ENCODE measurements at regions of chr11 and their contacts with region 1.

Region 1: DNA sequence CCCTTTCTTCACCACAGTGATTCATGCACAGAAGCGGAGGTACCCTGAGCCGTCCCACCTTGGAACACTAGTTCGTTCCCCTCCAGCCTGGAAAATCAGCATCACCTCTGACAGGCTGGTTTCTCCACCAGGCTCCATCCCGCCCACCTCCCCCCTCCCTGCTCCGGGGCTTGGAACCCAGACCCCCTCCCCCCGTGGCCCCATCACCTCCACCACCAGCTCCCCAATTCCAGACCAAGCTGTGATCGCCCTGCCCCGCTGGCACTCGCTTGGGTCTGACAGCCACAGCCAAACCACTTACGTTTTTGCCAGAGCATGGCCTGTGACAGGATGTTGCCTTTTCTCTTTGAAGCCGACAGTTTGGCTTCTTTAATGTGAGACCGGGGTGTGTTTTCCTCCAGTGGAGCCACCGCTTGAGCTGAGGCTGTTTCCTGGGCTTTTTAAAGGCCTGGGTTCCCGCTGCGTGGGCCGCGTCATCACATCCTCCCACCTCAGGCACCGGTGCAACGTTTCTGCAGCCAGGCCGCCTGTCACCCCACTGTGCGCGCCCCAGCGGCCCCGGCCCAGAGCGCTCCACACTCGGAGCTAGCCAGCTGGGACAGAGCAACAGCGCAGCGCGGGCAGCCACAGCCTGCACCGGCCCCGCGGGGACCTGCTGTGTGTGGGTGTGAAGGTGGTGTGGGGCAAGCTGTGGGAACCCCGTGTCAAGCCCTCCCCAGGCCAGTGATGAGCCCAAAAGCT is at the start of gene POU2AF1:
- DNase-seq: peak; percentile 81
- H3K4me3 Mint-ChIP-seq: peak within 1 kb of the TSS; percentile 71
- H3K27ac Mint-ChIP-seq: peak within 1 kb of the TSS; percentile 86
- H3K4me1 Mint-ChIP-seq: peaks cover 58% of the 10 kb centered on the region
- H3K27me3 Mint-ChIP-seq: no peaks in the 10 kb centered on the region
- total RNA-seq, gene POU2AF1: 0.48 to 0.62 TPM

Region 2: GRCh38 chr11:111349191-111349695 is 29.8 kb before region 1 on chr11:
- CTCF ChIA-PET with region 1: no interaction called
- intact Hi-C with region 1: no loop called
- DNase-seq: no peak
- H3K4me3 Mint-ChIP-seq: no peak overlapping the region
- H3K27ac Mint-ChIP-seq: no peak overlapping the region
- H3K4me1 Mint-ChIP-seq: no peaks in the 10 kb centered on the region
- H3K27me3 Mint-ChIP-seq: no peaks in the 10 kb centered on the region

Region 3: DNA sequence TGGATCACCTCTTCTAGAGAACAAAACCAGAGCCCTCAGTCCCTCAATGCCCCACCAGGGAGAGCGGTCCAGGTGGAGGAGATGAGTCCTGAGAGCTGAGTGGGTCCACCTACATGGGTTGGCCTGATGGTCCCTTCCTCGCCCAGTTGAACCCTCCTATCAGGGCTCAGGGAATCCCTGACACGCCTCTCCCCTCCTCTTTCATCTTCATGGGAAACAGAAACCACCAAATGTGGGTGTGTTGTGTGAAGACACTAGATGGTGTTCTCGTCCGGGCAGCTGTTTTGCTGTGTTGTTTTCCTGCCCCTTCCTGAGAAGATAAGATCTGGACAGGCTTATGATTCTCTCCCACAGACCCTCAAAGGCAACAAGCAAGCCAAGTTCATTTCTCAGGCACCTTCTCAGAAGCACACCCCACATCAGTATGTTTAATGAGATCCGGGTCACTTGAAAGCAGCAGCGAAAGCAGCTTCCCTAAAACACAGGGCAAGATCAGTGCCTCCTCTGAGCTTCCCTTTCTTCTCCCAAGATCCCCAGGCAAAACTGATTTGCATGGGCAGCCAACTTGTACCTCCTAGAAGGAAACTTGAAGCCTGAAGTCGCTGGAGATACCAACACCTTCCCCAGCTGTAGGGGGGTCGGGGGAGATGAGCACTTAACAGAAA is 35.4 kb after region 1 on chr11:
- CTCF ChIA-PET with region 1: interaction called, 3 read pairs
- intact Hi-C with region 1: loop called (anchors 1 kb)
- DNase-seq: peak; percentile 16
- H3K4me3 Mint-ChIP-seq: peak overlapping the region; percentile 10
- H3K27ac Mint-ChIP-seq: peak overlapping the region; percentile 3
- H3K4me1 Mint-ChIP-seq: peaks cover 49% of the 10 kb centered on the region
- H3K27me3 Mint-ChIP-seq: no peaks in the 10 kb centered on the region

Region 4: DNA sequence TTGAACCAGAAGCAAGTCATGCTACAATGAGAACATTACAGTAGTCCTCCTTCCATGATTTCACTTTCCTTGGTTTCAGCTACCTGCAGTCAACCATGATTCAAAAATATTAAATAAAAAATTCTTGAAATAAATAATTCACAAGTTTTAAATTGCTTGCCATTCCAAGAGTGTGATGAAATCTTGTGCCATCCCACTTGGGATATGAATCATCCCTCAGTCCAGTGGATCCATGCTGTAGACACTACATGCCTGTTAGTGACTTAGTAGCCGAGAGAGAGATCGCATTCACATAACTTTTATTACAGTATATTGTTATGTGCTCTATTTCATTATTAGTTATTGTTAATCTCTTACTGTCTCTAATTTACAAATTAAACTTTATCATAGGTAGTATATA is 141.5 kb after region 1 on chr11:
- CTCF ChIA-PET with region 1: no interaction called
- intact Hi-C with region 1: loop called (anchors 2 kb)
- DNase-seq: no peak
- H3K4me3 Mint-ChIP-seq: no peak overlapping the region
- H3K27ac Mint-ChIP-seq: peak overlapping the region; percentile 16
- H3K4me1 Mint-ChIP-seq: peaks cover 42% of the 10 kb centered on the region
- H3K27me3 Mint-ChIP-seq: peaks cover 3% of the 10 kb centered on the region

Region 5: DNA sequence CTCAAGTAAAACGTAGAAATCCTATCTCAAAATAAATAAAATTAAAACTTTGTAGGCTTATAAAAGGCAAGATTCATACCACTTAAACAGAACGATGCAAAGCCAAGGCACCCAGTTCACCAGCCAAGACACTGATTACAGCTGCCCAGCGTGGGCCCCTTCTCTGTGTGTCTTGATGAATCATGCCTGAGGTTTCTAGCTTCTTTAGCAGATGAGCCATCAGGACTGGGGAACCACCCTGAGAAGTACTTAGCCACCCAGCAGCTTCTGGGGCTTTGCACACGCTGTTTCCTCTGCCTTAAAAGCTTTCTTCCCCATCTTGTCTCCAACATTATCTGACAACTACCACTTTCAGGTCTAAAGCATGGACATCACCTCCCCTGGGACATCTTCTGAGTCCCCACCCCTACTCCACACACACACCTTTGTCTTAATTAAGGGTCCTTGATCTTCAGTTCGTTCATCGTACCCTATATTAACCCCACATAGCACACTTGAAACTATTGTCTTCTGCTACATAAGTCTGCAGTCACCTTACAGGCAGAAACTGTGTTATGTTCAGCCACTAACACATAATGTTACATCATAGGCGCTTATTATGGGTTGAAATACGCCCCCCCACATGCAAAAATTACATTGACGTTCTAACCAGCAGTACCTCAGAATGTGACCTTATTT is 152.8 kb after region 1 on chr11:
- CTCF ChIA-PET with region 1: no interaction called
- intact Hi-C with region 1: loop called (anchors 1 kb)
- DNase-seq: peak; percentile 88
- H3K4me3 Mint-ChIP-seq: no peak overlapping the region
- H3K27ac Mint-ChIP-seq: peak overlapping the region; percentile 82
- H3K4me1 Mint-ChIP-seq: peaks cover 47% of the 10 kb centered on the region
- H3K27me3 Mint-ChIP-seq: peaks cover 16% of the 10 kb centered on the region

Region 6: GRCh38 chr11:111759376-111759775 is 380.3 kb after region 1 on chr11:
- CTCF ChIA-PET with region 1: no interaction called
- intact Hi-C with region 1: no loop called
- DNase-seq: no peak
- H3K4me3 Mint-ChIP-seq: no peak overlapping the region
- H3K27ac Mint-ChIP-seq: no peak overlapping the region
- H3K4me1 Mint-ChIP-seq: peaks cover 16% of the 10 kb centered on the region
- H3K27me3 Mint-ChIP-seq: no peaks in the 10 kb centered on the region

Region 7: DNA sequence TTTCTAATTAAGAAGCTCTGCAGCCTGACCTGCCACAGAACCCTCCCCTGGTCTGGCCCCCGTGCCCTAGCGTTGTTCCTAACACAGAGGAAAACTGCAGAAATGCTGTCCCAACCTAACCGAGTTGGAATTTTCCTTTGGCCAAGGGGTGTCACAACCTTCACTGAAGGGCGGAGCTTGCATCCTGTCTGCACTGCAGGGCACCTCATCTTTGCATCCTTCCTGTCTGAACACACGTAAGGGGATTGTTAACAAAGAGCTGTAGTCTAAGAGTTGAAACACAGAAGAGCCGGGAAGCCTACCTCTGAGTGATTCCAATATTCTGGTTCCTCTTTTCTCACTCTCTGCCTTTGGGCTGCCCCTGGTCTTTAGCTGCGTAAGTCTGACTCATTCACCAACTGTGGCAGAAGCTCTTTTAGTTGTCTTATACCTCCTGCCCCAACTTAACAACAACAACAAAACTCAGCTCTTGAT is 559.7 kb after region 1 on chr11:
- CTCF ChIA-PET with region 1: no interaction called
- intact Hi-C with region 1: loop called (anchors 10 kb)
- DNase-seq: peak; percentile 75
- H3K4me3 Mint-ChIP-seq: peak overlapping the region; percentile 76
- H3K27ac Mint-ChIP-seq: peak overlapping the region; percentile 84
- H3K4me1 Mint-ChIP-seq: peaks cover 43% of the 10 kb centered on the region
- H3K27me3 Mint-ChIP-seq: no peaks in the 10 kb centered on the region